CD8-positive, alpha-beta T cell (primary cell): ENCODE measurements at regions of chr7 and their contacts with region 1.

Region 1: GRCh38 chr7:51759985-51760384 is 443.4 kb upstream of the COBL start:
- DNase-seq: no peak
- ATAC-seq: no peak
- H3K4me3 ChIP-seq: no peak overlapping the region
- H3K4me3 Mint-ChIP-seq: no peak overlapping the region
- H3K27ac ChIP-seq: no peak overlapping the region
- H3K27ac Mint-ChIP-seq: no peak overlapping the region
- H3K4me1 ChIP-seq: no peaks in the 10 kb centered on the region
- H3K4me1 Mint-ChIP-seq: no peaks in the 10 kb centered on the region
- H3K27me3 ChIP-seq: no peaks in the 10 kb centered on the region
- H3K27me3 Mint-ChIP-seq: no peaks in the 10 kb centered on the region
- CTCF ChIP-seq: no peak

Region 2: DNA sequence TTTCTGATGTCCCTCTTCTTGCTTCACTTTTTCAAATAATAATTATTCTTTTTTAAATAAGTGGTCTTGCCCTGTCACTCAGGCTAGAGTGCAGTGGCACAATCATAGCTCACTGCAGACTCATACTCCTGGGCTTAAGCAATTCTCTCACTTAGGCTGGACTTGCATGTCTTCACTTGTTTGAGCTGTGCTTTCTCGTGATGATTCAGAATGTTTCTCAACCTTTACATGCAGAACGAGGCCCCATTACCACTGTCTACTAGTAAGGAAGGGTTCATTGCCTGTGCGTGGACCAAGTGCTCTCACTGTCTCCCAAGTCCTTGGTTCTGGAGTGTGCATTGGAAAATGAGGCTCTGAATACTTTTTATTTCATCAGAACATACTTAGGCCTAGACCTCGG is 25.2 kb after region 1 on chr7:
- CTCF ChIA-PET with region 1: no interaction called
- POLR2A ChIA-PET with region 1: no interaction called
- intact Hi-C with region 1: no loop called
- DNase-seq: no peak
- ATAC-seq: no peak
- H3K4me3 ChIP-seq: no peak overlapping the region
- H3K4me3 Mint-ChIP-seq: no peak overlapping the region
- H3K27ac ChIP-seq: no peak overlapping the region
- H3K27ac Mint-ChIP-seq: no peak overlapping the region
- H3K4me1 ChIP-seq: no peaks in the 10 kb centered on the region
- H3K4me1 Mint-ChIP-seq: no peaks in the 10 kb centered on the region
- H3K27me3 ChIP-seq: no peaks in the 10 kb centered on the region
- H3K27me3 Mint-ChIP-seq: no peaks in the 10 kb centered on the region
- CTCF ChIP-seq: no peak

Region 3: DNA sequence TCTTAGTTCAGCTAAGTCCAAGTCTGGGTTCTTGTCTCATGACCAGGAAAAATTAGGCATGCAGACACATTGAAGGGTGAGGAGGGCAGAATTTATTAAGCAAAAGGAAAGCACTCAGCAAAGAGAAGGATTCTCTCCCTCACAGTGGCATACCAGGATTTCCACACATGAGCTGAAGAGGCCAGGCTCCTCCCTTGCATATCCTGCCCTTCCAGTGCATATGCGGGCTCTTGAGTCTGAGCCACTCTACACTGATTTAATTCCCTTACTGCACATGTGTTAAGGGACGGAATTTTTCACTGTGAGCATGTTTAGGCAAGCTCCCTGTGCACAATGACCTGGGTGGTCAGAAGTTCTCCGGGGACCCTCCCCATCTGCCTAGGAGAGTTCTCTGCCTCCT is 622.7 kb after region 1 on chr7:
- CTCF ChIA-PET with region 1: no interaction called
- POLR2A ChIA-PET with region 1: no interaction called
- intact Hi-C with region 1: loop called in 1 of 2 experiments (anchors 5 kb)
- DNase-seq: no peak
- ATAC-seq: no peak
- H3K4me3 ChIP-seq: no peak overlapping the region
- H3K4me3 Mint-ChIP-seq: no peak overlapping the region
- H3K27ac ChIP-seq: no peak overlapping the region
- H3K27ac Mint-ChIP-seq: no peak overlapping the region
- H3K4me1 ChIP-seq: no peaks in the 10 kb centered on the region
- H3K4me1 Mint-ChIP-seq: no peaks in the 10 kb centered on the region
- H3K27me3 ChIP-seq: no peaks in the 10 kb centered on the region
- H3K27me3 Mint-ChIP-seq: no peaks in the 10 kb centered on the region
- CTCF ChIP-seq: no peak